ENCODE measurements at regions of chr2 and their contacts with region 1.

Region 1: GRCh38 chr2:47323009-47323821 is 79.7 kb upstream of the MSH2 start:
- DNase-seq: no peak
- H3K4me3 ChIP-seq: no peak overlapping the region
- H3K27me3 ChIP-seq: no peaks in the 10 kb centered on the region
- CTCF ChIP-seq: peak; percentile 96

Region 2: GRCh38 chr2:46915811-46916630 is 407.2 kb before region 1 on chr2:
- CTCF ChIA-PET with region 1: interaction called, 25 read pairs
- POLR2A ChIA-PET with region 1: no interaction called
- DNase-seq: peak; percentile 70
- H3K4me3 ChIP-seq: peak overlapping the region; percentile 97
- H3K27me3 ChIP-seq: no peaks in the 10 kb centered on the region
- CTCF ChIP-seq: no peak

Region 3: DNA sequence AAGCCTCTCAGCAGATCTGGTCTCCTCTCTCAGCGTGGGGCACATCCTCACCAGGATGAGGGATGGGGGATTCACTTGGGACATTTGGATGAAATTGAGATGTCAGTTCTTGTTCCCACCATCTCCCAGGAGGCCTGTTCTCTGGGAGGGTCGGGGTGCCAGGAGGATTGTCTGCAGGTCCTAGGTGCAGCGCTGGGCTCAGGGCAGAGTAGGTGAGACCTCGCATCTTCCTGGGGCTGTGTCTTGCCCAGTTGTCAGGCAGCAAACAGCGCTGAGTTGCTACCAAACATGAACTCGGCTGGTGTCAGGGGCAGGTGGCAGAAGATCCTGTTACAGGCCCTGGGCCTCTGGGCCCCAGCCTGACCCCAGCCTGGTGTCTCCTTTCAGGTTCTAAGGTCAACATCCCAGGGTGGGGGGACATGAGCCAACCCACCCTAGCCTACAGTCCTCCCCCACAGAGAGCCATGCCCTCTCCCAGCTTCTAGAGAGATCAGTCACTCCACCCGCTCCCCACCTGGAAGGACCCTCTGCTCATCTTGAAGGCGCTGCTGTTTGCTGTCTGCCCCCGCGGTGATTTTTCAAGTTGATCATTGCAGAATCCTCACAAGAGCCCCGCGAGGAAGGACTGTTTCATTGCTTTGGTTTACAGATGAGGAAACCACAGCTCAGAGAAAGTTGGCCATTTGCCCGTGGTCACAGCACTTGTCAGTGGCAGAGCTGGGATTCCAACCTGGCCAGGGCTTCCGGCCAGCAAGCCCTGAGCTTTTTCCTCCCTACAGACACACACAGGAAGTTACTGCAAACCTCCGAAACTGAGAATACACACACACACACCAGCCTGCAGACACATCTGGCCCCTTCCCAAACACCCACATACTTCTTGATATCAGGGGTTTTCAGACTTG is 252.0 kb before region 1 on chr2:
- CTCF ChIA-PET with region 1: interaction called, 14 read pairs
- POLR2A ChIA-PET with region 1: no interaction called
- DNase-seq: no peak
- H3K4me3 ChIP-seq: no peak overlapping the region
- H3K27me3 ChIP-seq: no peaks in the 10 kb centered on the region
- CTCF ChIP-seq: no peak

Region 4: GRCh38 chr2:47309952-47310800 is 13.0 kb before region 1 on chr2:
- CTCF ChIA-PET with region 1: interaction called, 15 read pairs
- POLR2A ChIA-PET with region 1: no interaction called
- DNase-seq: no peak
- H3K4me3 ChIP-seq: no peak overlapping the region
- H3K27me3 ChIP-seq: no peaks in the 10 kb centered on the region
- CTCF ChIP-seq: no peak

Region 5: GRCh38 chr2:47339745-47340541 is 16.7 kb after region 1 on chr2:
- CTCF ChIA-PET with region 1: interaction called, 11 read pairs
- POLR2A ChIA-PET with region 1: no interaction called
- DNase-seq: no peak
- H3K4me3 ChIP-seq: no peak overlapping the region
- H3K27me3 ChIP-seq: no peaks in the 10 kb centered on the region
- CTCF ChIP-seq: no peak